CD4-positive, alpha-beta T cell (primary cell): ENCODE measurements at regions of chr10 and their contacts with region 1.

Region 1: DNA sequence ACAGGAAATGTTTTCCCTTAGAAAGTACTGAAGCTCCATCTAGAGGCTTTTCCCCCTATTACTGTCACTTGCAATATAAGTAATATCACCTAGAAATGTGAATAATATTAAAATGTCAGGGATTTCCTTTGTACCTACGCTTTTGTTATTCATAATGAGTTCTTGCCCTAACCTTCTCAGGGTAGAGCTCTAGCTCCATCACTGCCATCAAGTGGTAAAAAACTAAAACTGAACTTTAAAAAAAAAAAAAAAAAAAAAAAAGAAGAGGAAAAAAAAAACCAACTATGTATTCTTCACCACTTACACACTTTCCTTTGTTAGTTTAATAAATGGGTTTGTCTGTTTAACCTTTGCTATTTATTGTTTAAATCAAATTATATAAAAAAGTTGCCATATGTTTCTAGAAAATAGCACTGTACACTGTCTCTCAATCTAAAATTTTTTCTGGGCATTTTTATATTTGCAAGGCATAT is 49.9 kb downstream of the DNAJC1 start:
- DNase-seq: peak in 3 of 14 experiments; percentile 40 to 58 (median 54)
- ATAC-seq: peak; percentile 70
- H3K4me3 ChIP-seq: no peak overlapping the region
- H3K4me3 Mint-ChIP-seq: no peak overlapping the region
- H3K27ac ChIP-seq: no peak overlapping the region
- H3K27ac Mint-ChIP-seq: no peak overlapping the region
- H3K4me1 ChIP-seq: no peaks in the 10 kb centered on the region
- H3K4me1 Mint-ChIP-seq: no peaks in the 10 kb centered on the region
- H3K27me3 ChIP-seq: no peaks in the 10 kb centered on the region
- H3K27me3 Mint-ChIP-seq: no peaks in the 10 kb centered on the region
- CTCF ChIP-seq: peak; percentile 67

Region 2: GRCh38 chr10:20858292-20859124 is 1095.1 kb before region 1 on chr10:
- CTCF ChIA-PET with region 1: no interaction called
- POLR2A ChIA-PET with region 1: no interaction called
- intact Hi-C with region 1: loop called in 1 of 2 experiments (anchors 5 kb)
- DNase-seq: peak in 1 of 14 experiments; percentile 2
- ATAC-seq: no peak
- H3K4me3 ChIP-seq: no peak overlapping the region
- H3K4me3 Mint-ChIP-seq: no peak overlapping the region
- H3K27ac ChIP-seq: no peak overlapping the region
- H3K27ac Mint-ChIP-seq: no peak overlapping the region
- H3K4me1 ChIP-seq: no peaks in the 10 kb centered on the region
- H3K4me1 Mint-ChIP-seq: no peaks in the 10 kb centered on the region
- H3K27me3 ChIP-seq: no peaks in the 10 kb centered on the region
- H3K27me3 Mint-ChIP-seq: no peaks in the 10 kb centered on the region
- CTCF ChIP-seq: no peak

Region 3: DNA sequence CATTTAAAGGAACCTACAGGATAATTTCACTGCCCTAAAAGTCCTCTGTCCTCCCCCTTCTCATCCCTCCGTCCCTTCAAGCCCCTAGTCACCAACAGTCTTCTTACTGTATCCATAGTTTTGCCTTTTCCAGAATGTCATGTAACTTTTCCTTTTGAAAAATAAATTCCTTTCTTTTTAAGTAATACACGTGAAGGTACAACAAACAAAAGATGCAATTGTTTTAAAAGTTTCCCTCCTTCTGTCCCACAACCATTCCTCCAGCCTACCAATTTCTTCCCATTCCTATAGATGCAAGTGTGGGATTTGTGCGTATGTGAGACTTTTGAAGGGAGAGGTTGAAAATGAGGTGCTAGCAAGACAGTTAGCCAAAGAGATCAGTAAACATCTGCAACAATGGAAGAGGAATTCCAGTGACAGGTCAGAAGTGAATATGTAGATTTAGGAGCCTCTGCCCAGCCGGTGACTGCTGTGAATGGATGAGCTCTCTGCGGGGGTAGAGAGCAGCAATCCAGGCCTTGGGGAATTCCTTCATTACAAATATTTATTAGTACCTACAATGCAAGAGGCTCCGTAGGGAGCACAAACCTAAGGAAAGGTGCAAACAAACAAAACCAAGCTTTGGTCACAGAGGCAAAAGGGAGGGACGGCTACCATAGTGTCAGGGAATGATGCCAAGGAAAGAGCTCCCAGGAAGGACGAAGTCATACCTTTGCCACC is 671.7 kb before region 1 on chr10:
- CTCF ChIA-PET with region 1: no interaction called
- POLR2A ChIA-PET with region 1: no interaction called
- intact Hi-C with region 1: loop called in 1 of 2 experiments (anchors 5 kb)
- DNase-seq: no peak
- ATAC-seq: no peak
- H3K4me3 ChIP-seq: no peak overlapping the region
- H3K4me3 Mint-ChIP-seq: no peak overlapping the region
- H3K27ac ChIP-seq: no peak overlapping the region
- H3K27ac Mint-ChIP-seq: no peak overlapping the region
- H3K4me1 ChIP-seq: no peaks in the 10 kb centered on the region
- H3K4me1 Mint-ChIP-seq: no peaks in the 10 kb centered on the region
- H3K27me3 ChIP-seq: no peaks in the 10 kb centered on the region
- H3K27me3 Mint-ChIP-seq: peaks cover 17% of the 10 kb centered on the region
- CTCF ChIP-seq: no peak

Region 4: DNA sequence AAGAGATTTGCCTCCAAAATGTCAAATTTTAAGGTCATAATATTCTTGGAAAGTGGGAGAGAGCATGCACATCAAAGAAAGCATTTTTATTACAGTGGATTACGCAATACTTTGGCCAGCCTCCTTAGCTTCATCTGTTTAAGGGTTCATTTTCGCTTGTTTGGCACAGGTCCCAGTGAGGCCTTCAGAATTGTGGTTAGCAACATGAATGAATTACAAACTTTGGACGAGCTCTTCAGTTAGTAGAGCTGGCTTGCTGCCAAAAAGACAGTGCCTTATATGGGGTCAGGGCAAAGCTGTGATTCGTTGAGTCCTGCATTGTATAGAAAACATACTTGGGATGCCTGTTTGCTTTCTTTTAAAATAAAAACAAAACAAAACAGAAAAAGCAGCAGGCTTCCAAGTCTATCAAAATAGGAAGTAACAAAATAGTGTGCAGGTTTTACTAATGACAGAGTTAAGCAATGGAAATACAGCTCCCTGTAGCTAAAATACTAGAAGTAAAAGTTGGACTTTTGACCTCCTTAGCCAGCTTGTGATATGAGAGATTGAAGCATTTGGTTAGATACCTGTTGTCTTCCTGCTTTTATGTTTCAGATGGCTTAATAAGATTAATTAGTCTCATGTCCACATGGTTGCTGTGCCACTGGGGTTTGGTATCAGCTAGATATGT is 228.8 kb before region 1 on chr10:
- CTCF ChIA-PET with region 1: no interaction called
- POLR2A ChIA-PET with region 1: no interaction called
- intact Hi-C with region 1: loop called in 1 of 2 experiments (anchors 10 kb)
- DNase-seq: peak in 13 of 14 experiments; percentile 28 to 77 (median 53)
- ATAC-seq: peak; percentile 59
- H3K4me3 ChIP-seq: no peak overlapping the region
- H3K4me3 Mint-ChIP-seq: no peak overlapping the region
- H3K27ac ChIP-seq: no peak overlapping the region
- H3K27ac Mint-ChIP-seq: peak overlapping the region; percentile 62
- H3K4me1 ChIP-seq: peaks cover 8% of the 10 kb centered on the region
- H3K4me1 Mint-ChIP-seq: peaks cover 52% of the 10 kb centered on the region
- H3K27me3 ChIP-seq: no peaks in the 10 kb centered on the region
- H3K27me3 Mint-ChIP-seq: no peaks in the 10 kb centered on the region
- CTCF ChIP-seq: no peak